CD8-positive, alpha-beta T cell (primary cell): ENCODE measurements at regions of chr5 and their contacts with region 1.

Region 1: GRCh38 chr5:157271740-157272271 is 5.9 kb downstream of the CYFIP2 start:
- DNase-seq: peak; percentile 73 to 98 (median 88)
- ATAC-seq: peak; percentile 87
- H3K4me3 ChIP-seq: peak overlapping the region in 1 of 2 experiments; percentile 31
- H3K4me3 Mint-ChIP-seq: peak overlapping the region; percentile 56
- H3K27ac ChIP-seq: peak overlapping the region; percentile 79 to 82
- H3K27ac Mint-ChIP-seq: peak overlapping the region; percentile 98
- H3K4me1 ChIP-seq: peaks cover 89% of the 10 kb centered on the region
- H3K4me1 Mint-ChIP-seq: peaks cover 89% of the 10 kb centered on the region
- H3K27me3 ChIP-seq: no peaks in the 10 kb centered on the region
- H3K27me3 Mint-ChIP-seq: no peaks in the 10 kb centered on the region
- CTCF ChIP-seq: no peak

Region 2: DNA sequence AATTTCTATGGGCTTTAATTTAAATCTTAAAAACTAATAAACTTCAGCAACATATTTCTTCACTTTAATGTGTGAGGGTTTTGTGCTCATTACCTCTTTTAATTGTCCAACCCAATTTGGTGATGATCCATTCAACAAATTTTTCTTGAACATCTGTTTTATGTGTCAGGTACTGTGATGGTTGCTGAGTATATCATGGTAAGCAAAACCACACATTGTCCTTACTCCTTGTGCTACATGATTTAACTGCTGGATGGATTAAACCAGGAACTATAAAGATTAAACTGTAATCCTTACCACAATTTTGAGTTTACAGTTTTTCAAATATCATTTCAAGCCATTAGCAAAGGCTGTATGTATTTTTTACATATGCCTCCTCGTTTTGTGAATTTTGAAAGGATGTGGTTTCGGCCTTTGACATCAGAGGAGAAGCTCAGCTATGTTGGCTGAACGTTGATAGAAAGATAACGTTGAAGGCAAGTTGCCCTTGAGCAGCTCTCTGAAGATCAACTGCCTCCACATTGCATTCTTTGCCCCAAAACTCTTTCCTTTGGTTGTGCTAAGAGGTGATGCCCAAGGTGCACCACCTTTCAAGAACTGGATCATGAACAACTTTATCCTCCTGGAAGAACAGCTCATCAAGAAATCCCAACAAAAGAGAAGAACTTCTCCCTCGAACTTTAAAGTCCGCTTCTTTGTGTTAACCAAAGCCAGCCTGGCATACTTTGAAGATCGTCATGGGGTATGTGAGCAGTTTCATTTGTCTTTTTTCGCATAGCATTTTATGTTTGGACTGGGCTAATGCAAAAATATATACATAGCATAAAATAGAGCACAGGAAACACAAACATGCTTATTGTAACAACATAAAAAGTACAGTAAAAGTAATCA is 91.2 kb before region 1 on chr5 and contains the start of gene ITK:
- CTCF ChIA-PET with region 1: no interaction called
- POLR2A ChIA-PET with region 1: interaction called, 9 read pairs
- intact Hi-C with region 1: loop called in 1 of 2 experiments (anchors 2 kb)
- DNase-seq: peak in 5 of 9 experiments; percentile 39 to 90 (median 73)
- ATAC-seq: peak; percentile 76
- H3K4me3 ChIP-seq: peak within 1 kb of the TSS; percentile 78 to 84
- H3K4me3 Mint-ChIP-seq: peak within 1 kb of the TSS; percentile 93
- H3K27ac ChIP-seq: peak within 1 kb of the TSS; percentile 79 to 80
- H3K27ac Mint-ChIP-seq: peak within 1 kb of the TSS; percentile 95
- H3K4me1 ChIP-seq: peaks cover 39% of the 10 kb centered on the region
- H3K4me1 Mint-ChIP-seq: peaks cover 55% of the 10 kb centered on the region
- H3K27me3 ChIP-seq: no peaks in the 10 kb centered on the region
- H3K27me3 Mint-ChIP-seq: no peaks in the 10 kb centered on the region
- CTCF ChIP-seq: no peak
- total RNA-seq, gene ITK: 222 to 231 TPM

Region 3: GRCh38 chr5:157245477-157245876 is 26.3 kb before region 1 on chr5:
- CTCF ChIA-PET with region 1: interaction called, 57 read pairs
- POLR2A ChIA-PET with region 1: interaction called, 18 read pairs
- intact Hi-C with region 1: no loop called
- DNase-seq: no peak
- ATAC-seq: no peak
- H3K4me3 ChIP-seq: no peak overlapping the region
- H3K4me3 Mint-ChIP-seq: no peak overlapping the region
- H3K27ac ChIP-seq: peak overlapping the region in 1 of 2 experiments; percentile 72
- H3K27ac Mint-ChIP-seq: peak overlapping the region; percentile 95
- H3K4me1 ChIP-seq: peaks cover 62% of the 10 kb centered on the region
- H3K4me1 Mint-ChIP-seq: peaks cover 75% of the 10 kb centered on the region
- H3K27me3 ChIP-seq: no peaks in the 10 kb centered on the region
- H3K27me3 Mint-ChIP-seq: no peaks in the 10 kb centered on the region
- CTCF ChIP-seq: no peak

Region 4: GRCh38 chr5:157283434-157283833 is 11.6 kb after region 1 on chr5:
- CTCF ChIA-PET with region 1: interaction called, 26 read pairs
- POLR2A ChIA-PET with region 1: interaction called, 9 read pairs
- intact Hi-C with region 1: loop called in 1 of 2 experiments (anchors 1 kb)
- DNase-seq: peak in 5 of 9 experiments; percentile 34 to 68 (median 48)
- ATAC-seq: peak; percentile 86
- H3K4me3 ChIP-seq: no peak overlapping the region
- H3K4me3 Mint-ChIP-seq: peak overlapping the region; percentile 58
- H3K27ac ChIP-seq: peak overlapping the region; percentile 16 to 55
- H3K27ac Mint-ChIP-seq: peak overlapping the region; percentile 95
- H3K4me1 ChIP-seq: peaks cover 90% of the 10 kb centered on the region
- H3K4me1 Mint-ChIP-seq: peaks cover 86% of the 10 kb centered on the region
- H3K27me3 ChIP-seq: no peaks in the 10 kb centered on the region
- H3K27me3 Mint-ChIP-seq: no peaks in the 10 kb centered on the region
- CTCF ChIP-seq: no peak

Region 5: DNA sequence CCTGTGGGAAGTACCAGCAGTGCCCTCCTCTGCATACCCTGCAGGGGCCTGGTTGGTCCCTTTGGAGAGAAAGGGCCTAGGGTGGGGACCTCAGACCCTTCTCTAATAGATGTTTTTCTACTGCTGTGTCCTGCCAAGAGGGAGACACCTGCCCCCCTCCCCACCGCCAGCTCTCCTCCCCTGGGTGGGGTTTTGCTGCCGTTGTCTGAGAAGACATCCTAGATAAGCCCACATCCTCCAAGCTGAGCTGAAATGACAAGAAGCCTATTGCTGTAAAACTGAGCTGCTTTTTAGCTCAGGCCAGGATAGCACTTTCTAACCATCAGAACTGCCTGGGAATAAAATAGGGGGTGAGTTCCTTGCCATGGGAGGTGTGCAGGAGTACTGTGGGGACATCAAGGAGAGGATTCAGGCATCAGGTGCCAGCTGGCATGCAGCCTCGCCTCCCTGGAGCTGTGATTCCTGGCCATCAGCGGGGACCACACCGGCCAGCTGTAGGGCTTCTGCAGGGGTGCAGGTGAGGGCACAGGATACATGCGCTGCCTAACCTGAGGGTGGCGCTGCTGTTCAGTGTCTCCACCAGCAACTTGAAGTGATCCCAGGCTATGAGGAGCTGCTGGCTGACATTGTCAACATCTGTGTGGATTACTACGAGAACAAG is 32.0 kb after region 1 on chr5:
- CTCF ChIA-PET with region 1: interaction called, 12 read pairs
- POLR2A ChIA-PET with region 1: interaction called, 17 read pairs
- intact Hi-C with region 1: loop called in 1 of 2 experiments (anchors 2 kb)
- DNase-seq: peak; percentile 37 to 77 (median 61)
- ATAC-seq: peak; percentile 68
- H3K4me3 ChIP-seq: peak overlapping the region; percentile 6 to 23
- H3K4me3 Mint-ChIP-seq: peak overlapping the region; percentile 64
- H3K27ac ChIP-seq: peak overlapping the region; percentile 17 to 61
- H3K27ac Mint-ChIP-seq: peak overlapping the region; percentile 95
- H3K4me1 ChIP-seq: peaks cover 66% of the 10 kb centered on the region
- H3K4me1 Mint-ChIP-seq: peaks cover 64% of the 10 kb centered on the region
- H3K27me3 ChIP-seq: no peaks in the 10 kb centered on the region
- H3K27me3 Mint-ChIP-seq: no peaks in the 10 kb centered on the region
- CTCF ChIP-seq: peak; percentile 53

Region 6: GRCh38 chr5:157328277-157328912 is 56.6 kb after region 1 on chr5:
- CTCF ChIA-PET with region 1: interaction called, 10 read pairs
- POLR2A ChIA-PET with region 1: no interaction called
- intact Hi-C with region 1: no loop called
- DNase-seq: peak in 7 of 9 experiments; percentile 27 to 83 (median 60)
- ATAC-seq: peak; percentile 95
- H3K4me3 ChIP-seq: no peak overlapping the region
- H3K4me3 Mint-ChIP-seq: peak overlapping the region; percentile 47
- H3K27ac ChIP-seq: peak overlapping the region in 1 of 2 experiments; percentile 37
- H3K27ac Mint-ChIP-seq: peak overlapping the region; percentile 95
- H3K4me1 ChIP-seq: peaks cover 28% of the 10 kb centered on the region
- H3K4me1 Mint-ChIP-seq: peaks cover 34% of the 10 kb centered on the region
- H3K27me3 ChIP-seq: no peaks in the 10 kb centered on the region
- H3K27me3 Mint-ChIP-seq: no peaks in the 10 kb centered on the region
- CTCF ChIP-seq: peak; percentile 83